Caki2 (cell line): ENCODE measurements at regions of chr1 and their contacts with region 1.

Region 1: DNA sequence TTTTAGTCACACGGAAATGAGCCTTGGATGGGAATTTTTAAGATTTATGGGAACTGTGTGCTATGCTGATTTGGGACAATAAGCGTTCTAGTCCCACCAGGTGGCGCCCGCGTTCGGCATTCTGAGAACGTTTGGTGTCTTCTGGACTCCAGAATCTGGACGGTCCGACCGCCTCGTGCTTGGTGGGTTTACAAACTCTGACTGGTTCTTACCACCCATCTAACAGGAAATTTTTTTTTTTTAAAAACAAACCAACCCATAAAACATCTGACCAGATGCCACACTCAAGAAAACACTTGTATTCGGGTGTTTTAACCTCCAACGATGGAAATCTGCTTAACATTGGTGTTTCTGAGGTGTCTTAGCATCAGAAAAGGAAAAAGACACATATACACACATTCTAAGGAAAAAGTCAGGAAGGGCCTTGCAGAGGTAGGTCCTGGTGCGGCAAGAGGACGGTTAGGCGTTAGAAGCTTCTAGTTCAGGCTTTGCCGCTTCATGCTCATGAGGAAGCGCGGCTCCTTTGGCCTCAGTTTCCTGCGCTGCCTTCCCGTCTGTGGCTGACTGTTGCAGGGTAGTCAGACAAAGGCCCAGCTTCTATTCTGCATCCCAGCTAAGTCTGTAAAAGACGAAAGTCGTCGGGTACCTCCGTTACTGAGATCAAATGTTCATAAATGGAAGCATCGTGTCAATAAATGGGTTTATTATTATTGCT is 814 bp upstream of the DYRK3 start:
- DNase-seq: peak; percentile 67

Region 2: GRCh38 chr1:206723812-206724472 is 89.4 kb after region 1 on chr1:
- in situ Hi-C with region 1: loop called (anchors 5 kb)
- DNase-seq: peak; percentile 64

Region 3: DNA sequence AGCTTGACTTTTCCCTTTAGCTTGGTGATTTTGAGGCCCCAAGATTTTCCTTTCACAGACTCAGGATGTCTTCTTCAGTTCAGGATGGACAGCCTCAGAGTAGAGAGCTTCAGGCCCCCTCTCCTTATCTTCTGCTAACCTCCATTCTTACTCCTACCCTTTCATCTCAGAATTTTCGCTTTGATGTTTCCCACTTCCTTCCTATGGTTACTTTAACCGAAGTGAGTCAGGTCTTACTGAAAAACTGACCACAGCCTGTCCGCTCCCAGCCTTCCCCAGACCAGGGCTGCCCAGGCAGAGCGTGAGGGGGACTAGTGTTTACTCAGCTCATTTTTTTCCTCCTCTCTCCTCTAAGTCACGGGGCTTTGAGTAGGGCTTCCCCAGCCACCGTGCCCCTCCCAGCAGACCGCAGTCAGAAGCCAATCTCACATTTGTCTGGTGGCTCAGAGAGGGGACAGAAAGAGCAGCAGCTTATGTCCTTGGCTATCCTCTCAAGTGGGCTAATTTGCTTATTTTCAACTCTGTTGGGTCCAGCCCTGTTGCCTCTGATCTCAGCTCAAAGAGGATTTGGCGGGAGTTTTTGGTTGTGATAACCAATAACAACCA is 131.8 kb after region 1 on chr1:
- in situ Hi-C with region 1: no loop called
- DNase-seq: no peak

Region 4: GRCh38 chr1:206982216-206982615 is 347.7 kb after region 1 on chr1:
- in situ Hi-C with region 1: loop called (anchors 5 kb)
- DNase-seq: peak; percentile 56